Activated CD8-positive, alpha-beta memory T cell treated with anti-CD3 and anti-CD28 coated beads, Interleukin-2, amount 10 ng/mL, durations not matched to agents 7 days and 5 days (primary cell): ENCODE measurements at regions of chr10 and their contacts with region 1.

Region 1: DNA sequence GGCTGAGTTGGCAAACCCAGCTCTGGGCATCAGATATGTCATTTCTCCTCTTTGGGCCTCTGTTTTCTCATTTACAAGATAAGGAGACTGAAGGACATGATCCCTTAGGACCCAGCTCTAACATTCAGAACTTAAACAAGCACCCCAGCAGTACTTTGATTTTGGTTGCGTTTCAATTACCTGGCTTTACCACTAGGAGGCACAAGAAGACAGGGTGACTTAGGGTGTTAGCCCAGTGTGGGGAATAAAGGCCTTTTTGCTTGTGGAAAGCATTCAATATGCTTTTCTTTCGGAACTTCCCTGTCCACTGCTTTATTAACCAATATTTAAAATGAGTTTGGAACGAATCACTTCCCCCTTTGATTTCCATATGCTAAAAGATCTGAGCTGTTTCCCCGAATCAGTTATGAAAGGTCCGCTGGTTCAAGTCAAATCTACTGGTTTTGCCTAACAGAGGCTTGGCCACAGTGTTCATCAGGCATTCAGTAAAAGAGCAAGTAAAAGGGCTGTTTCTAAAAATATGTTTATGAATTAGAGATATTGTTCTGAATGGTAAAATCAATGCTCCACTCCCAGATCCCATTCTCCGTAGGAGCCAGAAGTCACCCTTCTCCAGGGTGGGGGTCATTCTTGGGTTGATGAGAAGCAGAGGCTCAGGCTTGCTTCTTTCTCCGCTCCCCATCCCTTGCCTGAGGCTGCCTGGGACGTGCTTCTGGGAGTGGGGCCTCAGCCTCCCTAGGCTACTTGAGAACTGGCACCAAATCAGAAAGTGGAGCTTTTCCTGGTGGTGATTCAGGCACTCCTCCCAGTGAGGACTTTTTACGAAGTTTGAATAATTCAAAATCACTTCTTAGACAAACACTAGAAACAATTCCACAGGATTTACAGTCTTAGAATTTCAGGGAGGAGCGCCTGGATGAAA is 105.5 kb downstream of the MYOF start:
- DNase-seq: peak; percentile 57
- ATAC-seq: peak; percentile 39
- H3K4me3 Mint-ChIP-seq: no peak overlapping the region
- H3K27ac Mint-ChIP-seq: no peak overlapping the region
- H3K4me1 Mint-ChIP-seq: peaks cover 34% of the 10 kb centered on the region
- H3K27me3 Mint-ChIP-seq: no peaks in the 10 kb centered on the region

Region 2: GRCh38 chr10:93363891-93364648 is 12.6 kb before region 1 on chr10:
- CTCF ChIA-PET with region 1: interaction called, 21 read pairs
- DNase-seq: no peak
- ATAC-seq: no peak
- H3K4me3 Mint-ChIP-seq: no peak overlapping the region
- H3K27ac Mint-ChIP-seq: no peak overlapping the region
- H3K4me1 Mint-ChIP-seq: peaks cover 2% of the 10 kb centered on the region
- H3K27me3 Mint-ChIP-seq: no peaks in the 10 kb centered on the region

Region 3: GRCh38 chr10:93413252-93413689 is 36.6 kb after region 1 on chr10:
- CTCF ChIA-PET with region 1: interaction called, 23 read pairs
- DNase-seq: peak; percentile 78
- ATAC-seq: peak; percentile 84
- H3K4me3 Mint-ChIP-seq: no peak overlapping the region
- H3K27ac Mint-ChIP-seq: peak overlapping the region; percentile 87
- H3K4me1 Mint-ChIP-seq: peaks cover 27% of the 10 kb centered on the region
- H3K27me3 Mint-ChIP-seq: no peaks in the 10 kb centered on the region

Region 4: GRCh38 chr10:93461807-93462178 is 85.2 kb after region 1 on chr10:
- CTCF ChIA-PET with region 1: interaction called, 33 read pairs
- DNase-seq: peak; percentile 45
- ATAC-seq: no peak
- H3K4me3 Mint-ChIP-seq: no peak overlapping the region
- H3K27ac Mint-ChIP-seq: peak overlapping the region; percentile 4
- H3K4me1 Mint-ChIP-seq: peaks cover 22% of the 10 kb centered on the region
- H3K27me3 Mint-ChIP-seq: no peaks in the 10 kb centered on the region

Region 5: DNA sequence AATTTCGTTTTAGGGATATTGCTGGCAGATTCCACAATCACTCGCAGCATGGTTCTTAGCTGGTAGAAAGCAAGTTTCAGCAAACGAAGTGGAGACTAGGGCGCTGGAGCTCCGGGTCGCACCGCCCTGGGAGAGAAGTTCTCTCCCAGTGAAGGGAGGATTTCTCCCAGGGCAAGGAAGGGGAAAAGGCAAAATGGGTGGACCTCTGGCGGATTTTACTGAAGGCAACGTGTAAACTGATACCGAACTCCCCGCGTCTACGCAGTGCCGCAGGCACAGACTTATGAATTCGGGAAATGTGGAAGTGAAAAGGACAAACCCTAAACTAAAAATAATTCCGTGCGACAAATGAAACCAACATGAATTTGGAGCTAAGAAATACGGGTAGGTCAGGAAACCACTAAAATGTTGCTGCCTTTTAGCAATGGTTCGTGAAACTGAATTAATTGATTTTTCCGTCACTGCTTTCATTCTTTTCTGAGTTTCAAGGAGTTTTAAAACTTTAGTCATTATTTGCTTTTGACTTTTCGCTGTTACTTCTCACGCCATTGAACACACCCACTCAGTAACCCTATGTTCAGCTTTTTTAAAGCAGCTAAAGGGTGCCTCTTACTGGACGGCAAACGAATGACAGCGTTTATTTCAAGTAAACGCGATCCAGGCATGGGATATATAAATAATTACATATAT is 105.7 kb after region 1 on chr10 and contains the start of gene MYOF:
- CTCF ChIA-PET with region 1: interaction called, 365 read pairs
- DNase-seq: peak; percentile 71
- ATAC-seq: peak; percentile 83
- H3K4me3 Mint-ChIP-seq: peak within 1 kb of the TSS; percentile 81
- H3K27ac Mint-ChIP-seq: peak within 1 kb of the TSS; percentile 83
- H3K4me1 Mint-ChIP-seq: peaks cover 18% of the 10 kb centered on the region
- H3K27me3 Mint-ChIP-seq: peaks cover 25% of the 10 kb centered on the region
- total RNA-seq, gene MYOF: 5.5 to 6.6 TPM

Region 6: GRCh38 chr10:93512565-93512964 is 135.9 kb after region 1 on chr10:
- CTCF ChIA-PET with region 1: interaction called, 71 read pairs
- DNase-seq: no peak
- ATAC-seq: no peak
- H3K4me3 Mint-ChIP-seq: no peak overlapping the region
- H3K27ac Mint-ChIP-seq: no peak overlapping the region
- H3K4me1 Mint-ChIP-seq: peaks cover 24% of the 10 kb centered on the region
- H3K27me3 Mint-ChIP-seq: no peaks in the 10 kb centered on the region